ENCODE measurements at regions of chr9 and their contacts with region 1.

Region 1: DNA sequence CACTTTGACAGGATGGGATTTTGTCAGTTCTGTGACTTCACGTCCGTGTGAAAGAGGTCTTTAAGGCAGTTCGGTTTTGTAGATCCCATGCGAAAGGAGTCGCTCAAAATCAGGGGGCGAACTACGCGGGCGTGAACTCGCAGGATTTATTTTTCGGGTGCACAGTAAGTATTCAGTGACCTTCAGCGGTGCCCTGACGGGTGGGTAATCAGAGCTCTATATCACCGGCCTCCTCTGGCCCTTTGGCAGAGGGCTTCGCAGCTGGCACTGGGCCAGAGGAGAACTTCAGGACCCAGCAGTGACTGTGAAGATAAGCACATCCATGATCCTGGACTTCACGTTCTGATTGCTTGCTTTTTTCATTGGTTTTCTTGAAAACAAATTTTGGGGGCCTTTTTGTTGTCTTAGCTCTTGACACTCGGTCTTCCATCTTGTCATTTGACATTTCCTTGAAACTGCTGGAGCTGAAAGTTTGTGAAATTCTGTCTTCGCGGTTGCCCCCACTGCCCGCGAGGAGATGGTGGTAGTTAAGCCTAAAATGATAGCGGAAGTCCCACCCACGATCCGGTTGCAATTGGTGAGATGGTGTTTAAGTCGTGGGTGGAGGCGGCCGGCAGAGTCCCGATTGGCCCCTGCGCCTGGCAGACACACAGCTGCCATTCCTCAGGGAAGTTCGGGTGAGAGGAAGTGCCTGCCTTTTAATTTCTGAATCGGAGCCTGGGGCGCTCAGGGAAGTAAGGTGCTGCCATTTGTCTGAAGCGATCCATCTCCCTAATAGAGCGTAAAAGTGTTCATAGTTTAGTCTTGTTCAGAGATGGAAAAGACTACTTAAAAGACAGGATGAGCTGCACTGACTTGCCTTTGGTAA is at the start of gene FAM120AOS:
- DNase-seq: peak; percentile 79 to 91 (median 80)
- H3K4me3 ChIP-seq: peak within 1 kb of the TSS; percentile 69 to 83
- H3K4me3 Mint-ChIP-seq: peak within 1 kb of the TSS; percentile 93 to 98 (median 96)
- H3K27ac ChIP-seq: peak within 1 kb of the TSS; percentile 69
- H3K27ac Mint-ChIP-seq: peak within 1 kb of the TSS; percentile 88 to 99 (median 97)
- H3K4me1 ChIP-seq: peaks cover 62% of the 10 kb centered on the region
- H3K4me1 Mint-ChIP-seq: peaks cover 36 to 63% (median 51%) of the 10 kb centered on the region in 4 donors
- H3K27me3 ChIP-seq: no peaks in the 10 kb centered on the region
- H3K27me3 Mint-ChIP-seq: no peaks in the 10 kb centered on the region
- total RNA-seq, gene FAM120AOS: 49.7 to 50.8 TPM

Region 2: DNA sequence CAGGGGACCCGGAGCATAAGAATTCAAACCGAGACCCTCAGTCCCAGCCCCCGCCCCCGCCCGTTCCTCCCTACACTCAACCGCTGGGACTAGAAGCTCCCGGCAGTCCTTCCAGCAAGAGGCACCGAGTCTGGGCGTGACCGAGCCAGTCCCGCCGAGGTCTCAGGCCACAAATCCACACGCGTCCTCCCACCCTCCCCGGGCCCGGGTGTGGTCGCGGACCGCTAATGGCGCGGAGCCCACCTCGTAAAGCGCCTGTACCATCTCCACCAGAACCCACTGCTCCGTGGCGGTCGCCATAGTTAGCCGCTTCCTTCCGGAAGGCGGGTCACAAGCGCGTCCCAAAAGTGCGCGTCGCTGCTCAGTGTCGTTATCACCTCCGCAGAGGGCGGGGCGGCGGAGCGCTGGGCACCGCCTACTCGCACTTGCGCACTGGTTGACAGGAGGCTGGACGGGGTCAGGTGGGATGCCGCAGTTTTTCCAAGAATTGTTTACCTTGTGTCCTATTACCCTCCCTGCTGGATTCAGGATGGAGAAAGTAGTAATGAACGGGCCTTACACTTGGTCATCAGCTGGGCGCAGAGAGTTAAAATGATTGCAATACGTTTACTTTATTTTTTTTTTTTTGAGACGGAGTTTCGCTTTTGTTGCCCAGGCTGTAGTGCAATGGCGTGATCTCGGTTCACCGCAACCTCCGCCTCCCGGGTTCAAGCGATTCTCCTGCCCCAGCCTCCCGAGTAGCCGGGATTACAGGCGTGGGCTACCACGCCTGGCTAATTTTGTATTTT is 1338.0 kb before region 1 on chr9 and contains the start of gene SPTLC1:
- CTCF ChIA-PET with region 1: no interaction called
- POLR2A ChIA-PET with region 1: no interaction called
- intact Hi-C with region 1: loop called (anchors 10 kb)
- DNase-seq: peak; percentile 90 to 95 (median 94)
- H3K4me3 ChIP-seq: peak within 1 kb of the TSS; percentile 66 to 90
- H3K4me3 Mint-ChIP-seq: peak within 1 kb of the TSS; percentile 97 to 99 (median 99)
- H3K27ac ChIP-seq: peak within 1 kb of the TSS; percentile 89
- H3K27ac Mint-ChIP-seq: peak within 1 kb of the TSS; percentile 96 to 100 (median 99)
- H3K4me1 ChIP-seq: peaks cover 26% of the 10 kb centered on the region
- H3K4me1 Mint-ChIP-seq: peaks cover 26 to 48% (median 34%) of the 10 kb centered on the region in 4 donors
- H3K27me3 ChIP-seq: no peaks in the 10 kb centered on the region
- H3K27me3 Mint-ChIP-seq: no peaks in the 10 kb centered on the region
- total RNA-seq, gene SPTLC1: 56.8 to 57.9 TPM

Region 3: GRCh38 chr9:93134015-93134739 is 319.1 kb before region 1 on chr9 and contains the start of gene NINJ1:
- CTCF ChIA-PET with region 1: no interaction called
- POLR2A ChIA-PET with region 1: interaction called, 3 read pairs
- intact Hi-C with region 1: loop called (anchors 10 kb)
- DNase-seq: peak; percentile 87 to 96 (median 89)
- H3K4me3 ChIP-seq: peak within 1 kb of the TSS; percentile 52 to 82
- H3K4me3 Mint-ChIP-seq: peak within 1 kb of the TSS; percentile 88 to 96 (median 90)
- H3K27ac ChIP-seq: peak within 1 kb of the TSS; percentile 92
- H3K27ac Mint-ChIP-seq: peak within 1 kb of the TSS; percentile 97 to 99 (median 99)
- H3K4me1 ChIP-seq: peaks cover 48% of the 10 kb centered on the region
- H3K4me1 Mint-ChIP-seq: peaks cover 26 to 79% (median 50%) of the 10 kb centered on the region in 4 donors
- H3K27me3 ChIP-seq: no peaks in the 10 kb centered on the region
- H3K27me3 Mint-ChIP-seq: no peaks in the 10 kb centered on the region
- total RNA-seq, gene NINJ1: 31.1 to 31.3 TPM

Region 4: DNA sequence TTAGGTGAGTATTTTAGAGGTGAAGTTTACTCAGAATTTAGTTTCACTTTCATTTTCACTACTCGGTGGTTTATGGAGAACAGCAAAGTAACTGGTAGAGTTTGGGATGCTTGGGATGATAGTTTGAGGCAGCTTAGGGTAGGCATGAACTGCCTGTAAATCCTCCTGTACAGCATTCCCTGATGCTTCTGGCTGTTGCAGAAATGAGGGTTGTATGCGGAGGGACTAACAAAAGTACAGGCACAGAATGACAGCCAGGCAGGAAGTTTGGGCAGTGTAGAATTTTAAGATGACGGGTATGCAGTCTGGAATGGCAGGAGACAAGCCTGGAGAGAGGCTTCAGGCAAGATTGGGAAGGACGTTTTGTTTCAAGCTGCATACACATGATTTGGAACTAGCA is 48.1 kb after region 1 on chr9:
- CTCF ChIA-PET with region 1: no interaction called
- POLR2A ChIA-PET with region 1: interaction called, 4 read pairs
- intact Hi-C with region 1: loop called (anchors 5 kb)
- DNase-seq: peak in 4 of 5 donors; percentile 18 to 36 (median 31)
- H3K4me3 ChIP-seq: peak overlapping the region; percentile 52 to 74
- H3K4me3 Mint-ChIP-seq: peak overlapping the region; percentile 85 to 96 (median 93)
- H3K27ac ChIP-seq: peak overlapping the region; percentile 61
- H3K27ac Mint-ChIP-seq: peak overlapping the region; percentile 76 to 97 (median 95)
- H3K4me1 ChIP-seq: peaks cover 34% of the 10 kb centered on the region
- H3K4me1 Mint-ChIP-seq: peaks cover 43 to 65% (median 54%) of the 10 kb centered on the region in 4 donors
- H3K27me3 ChIP-seq: no peaks in the 10 kb centered on the region
- H3K27me3 Mint-ChIP-seq: no peaks in the 10 kb centered on the region

Region 5: GRCh38 chr9:93660352-93661051 is 207.2 kb after region 1 on chr9:
- CTCF ChIA-PET with region 1: no interaction called
- POLR2A ChIA-PET with region 1: no interaction called
- intact Hi-C with region 1: no loop called
- DNase-seq: no peak
- H3K4me3 ChIP-seq: no peak overlapping the region
- H3K4me3 Mint-ChIP-seq: no peak overlapping the region
- H3K27ac ChIP-seq: no peak overlapping the region
- H3K27ac Mint-ChIP-seq: no peak overlapping the region
- H3K4me1 ChIP-seq: no peaks in the 10 kb centered on the region
- H3K4me1 Mint-ChIP-seq: no peaks in the 10 kb centered on the region
- H3K27me3 ChIP-seq: no peaks in the 10 kb centered on the region
- H3K27me3 Mint-ChIP-seq: no peaks in the 10 kb centered on the region

Region 6: DNA sequence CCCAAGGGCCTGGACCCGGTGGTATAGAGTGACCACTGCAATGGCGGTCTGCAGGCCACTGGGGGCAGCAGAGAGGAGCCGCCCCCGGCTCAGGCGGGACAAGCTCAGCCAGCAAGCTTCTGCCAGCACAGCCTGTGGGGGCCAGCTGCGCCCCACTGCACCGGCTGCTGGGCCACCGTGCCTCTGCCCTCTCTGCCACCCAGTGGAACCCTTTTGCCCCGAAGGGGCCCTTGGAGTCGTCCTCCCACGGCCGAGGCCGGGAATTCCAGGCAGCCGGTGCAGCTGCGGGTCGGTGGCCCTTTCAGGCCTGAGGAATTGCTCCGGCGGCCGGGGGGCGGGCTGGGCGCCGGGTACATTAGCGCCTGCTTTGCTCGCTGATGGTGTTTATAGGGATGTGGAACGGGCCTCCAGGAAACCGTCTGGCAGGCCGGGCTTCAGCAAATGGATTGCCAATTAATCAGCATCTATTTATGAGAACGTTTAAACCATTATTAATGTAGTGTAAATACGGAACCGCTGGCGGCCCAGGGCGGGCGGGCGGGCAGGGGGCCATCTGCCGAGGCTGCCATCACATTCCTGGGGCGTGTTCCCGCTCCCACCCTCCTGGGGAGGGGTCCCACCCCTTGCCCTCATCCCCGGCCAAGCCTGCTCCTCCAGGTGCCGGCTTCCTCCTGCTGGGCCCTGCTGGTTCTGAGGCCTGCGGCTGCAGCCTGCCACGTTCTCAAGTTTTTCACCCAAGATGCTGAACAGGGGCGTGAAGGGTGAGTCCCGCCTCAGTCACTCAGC is 374.5 kb after region 1 on chr9:
- CTCF ChIA-PET with region 1: no interaction called
- POLR2A ChIA-PET with region 1: no interaction called
- intact Hi-C with region 1: no loop called
- DNase-seq: peak in 3 of 5 donors; percentile 15 to 19 (median 16)
- H3K4me3 ChIP-seq: no peak overlapping the region
- H3K4me3 Mint-ChIP-seq: no peak overlapping the region
- H3K27ac ChIP-seq: no peak overlapping the region
- H3K27ac Mint-ChIP-seq: no peak overlapping the region
- H3K4me1 ChIP-seq: peaks cover 6% of the 10 kb centered on the region
- H3K4me1 Mint-ChIP-seq: peaks cover 6 to 13% (median 9%) of the 10 kb centered on the region in 4 donors
- H3K27me3 ChIP-seq: no peaks in the 10 kb centered on the region
- H3K27me3 Mint-ChIP-seq: peaks cover 20 to 42% of the 10 kb centered on the region in 2 donors

Region 7: GRCh38 chr9:94259077-94259892 is 806.0 kb after region 1 on chr9 and contains the start of gene ZNF169:
- CTCF ChIA-PET with region 1: no interaction called
- POLR2A ChIA-PET with region 1: no interaction called
- intact Hi-C with region 1: loop called (anchors 10 kb)
- DNase-seq: peak; percentile 78 to 88 (median 80)
- H3K4me3 ChIP-seq: peak within 1 kb of the TSS; percentile 85 to 99
- H3K4me3 Mint-ChIP-seq: peak within 1 kb of the TSS; percentile 96 to 100 (median 98)
- H3K27ac ChIP-seq: peak within 1 kb of the TSS; percentile 66
- H3K27ac Mint-ChIP-seq: peak within 1 kb of the TSS; percentile 88 to 99 (median 98)
- H3K4me1 ChIP-seq: peaks cover 19% of the 10 kb centered on the region
- H3K4me1 Mint-ChIP-seq: peaks cover 26 to 45% (median 36%) of the 10 kb centered on the region in 4 donors
- H3K27me3 ChIP-seq: no peaks in the 10 kb centered on the region
- H3K27me3 Mint-ChIP-seq: peaks cover 2 to 7% of the 10 kb centered on the region in 2 donors
- total RNA-seq, gene ZNF169: 22.3 to 25.2 TPM

Measured in CD4-positive, alpha-beta memory T cell (primary cell).